Panc1 (cell line): ENCODE measurements at regions of chr19 and their contacts with region 1.

Region 1: GRCh38 chr19:3350014-3350663 is 16.2 kb upstream of the NFIC start:
- DNase-seq: no peak
- ATAC-seq: no peak
- H3K4me3 ChIP-seq: no peak overlapping the region
- H3K27ac ChIP-seq: no peak overlapping the region
- H3K4me1 ChIP-seq: peaks cover 13% of the 10 kb centered on the region
- H3K27me3 ChIP-seq: no peaks in the 10 kb centered on the region
- CTCF ChIP-seq: no peak

Region 2: DNA sequence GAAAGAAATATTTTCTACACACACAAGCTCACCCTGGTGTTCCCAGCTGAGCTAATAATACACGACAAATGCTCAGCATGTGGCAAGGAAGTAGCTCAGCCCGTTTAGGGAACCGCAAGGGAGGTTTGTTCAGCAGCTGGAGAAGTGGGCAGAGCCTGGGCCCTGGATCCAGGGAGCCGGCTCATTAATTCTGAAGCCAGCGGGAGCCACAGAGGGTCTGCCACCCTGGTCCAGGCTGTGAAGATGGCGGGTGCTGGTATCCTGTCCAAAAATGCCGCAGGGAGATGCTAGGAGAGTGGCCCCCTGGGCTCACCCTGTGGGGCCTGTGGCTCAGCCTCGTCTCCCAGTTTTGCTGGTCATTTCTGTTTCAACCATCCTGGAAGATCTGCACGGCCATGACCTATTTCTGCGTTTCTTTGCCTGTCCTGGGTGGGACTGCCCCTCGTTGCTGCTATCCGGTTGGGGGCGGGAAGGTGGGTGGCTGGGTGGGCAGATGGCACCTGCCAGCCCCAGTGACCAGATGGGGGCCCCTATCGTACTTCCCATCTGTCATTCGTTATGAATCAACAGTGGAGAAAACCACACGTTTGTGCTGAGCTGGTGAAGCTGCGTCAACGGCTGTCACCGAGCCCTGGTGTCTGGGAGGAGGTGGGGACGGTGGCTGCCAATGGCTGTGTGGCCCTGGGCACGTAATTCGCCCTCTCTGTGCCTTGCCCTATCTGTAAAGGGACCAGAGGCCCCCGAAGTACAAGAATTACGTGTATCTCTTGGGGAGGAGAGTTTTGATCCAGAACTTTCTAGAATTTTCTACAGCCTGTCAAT is 217.0 kb before region 1 on chr19:
- CTCF ChIA-PET with region 1: no interaction called
- POLR2A ChIA-PET with region 1: interaction called, 15 read pairs
- in situ Hi-C with region 1: no loop called
- intact Hi-C with region 1: no loop called
- DNase-seq: no peak
- ATAC-seq: peak; percentile 73
- H3K4me3 ChIP-seq: peak overlapping the region in 1 of 2 experiments; percentile 18; a peak in 1 of 4 replicates
- H3K27ac ChIP-seq: peak overlapping the region; percentile 59; the same call in 1 of the 2 replicates
- H3K4me1 ChIP-seq: peaks cover 4% of the 10 kb centered on the region
- H3K27me3 ChIP-seq: no peaks in the 10 kb centered on the region
- CTCF ChIP-seq: no peak

Region 3: DNA sequence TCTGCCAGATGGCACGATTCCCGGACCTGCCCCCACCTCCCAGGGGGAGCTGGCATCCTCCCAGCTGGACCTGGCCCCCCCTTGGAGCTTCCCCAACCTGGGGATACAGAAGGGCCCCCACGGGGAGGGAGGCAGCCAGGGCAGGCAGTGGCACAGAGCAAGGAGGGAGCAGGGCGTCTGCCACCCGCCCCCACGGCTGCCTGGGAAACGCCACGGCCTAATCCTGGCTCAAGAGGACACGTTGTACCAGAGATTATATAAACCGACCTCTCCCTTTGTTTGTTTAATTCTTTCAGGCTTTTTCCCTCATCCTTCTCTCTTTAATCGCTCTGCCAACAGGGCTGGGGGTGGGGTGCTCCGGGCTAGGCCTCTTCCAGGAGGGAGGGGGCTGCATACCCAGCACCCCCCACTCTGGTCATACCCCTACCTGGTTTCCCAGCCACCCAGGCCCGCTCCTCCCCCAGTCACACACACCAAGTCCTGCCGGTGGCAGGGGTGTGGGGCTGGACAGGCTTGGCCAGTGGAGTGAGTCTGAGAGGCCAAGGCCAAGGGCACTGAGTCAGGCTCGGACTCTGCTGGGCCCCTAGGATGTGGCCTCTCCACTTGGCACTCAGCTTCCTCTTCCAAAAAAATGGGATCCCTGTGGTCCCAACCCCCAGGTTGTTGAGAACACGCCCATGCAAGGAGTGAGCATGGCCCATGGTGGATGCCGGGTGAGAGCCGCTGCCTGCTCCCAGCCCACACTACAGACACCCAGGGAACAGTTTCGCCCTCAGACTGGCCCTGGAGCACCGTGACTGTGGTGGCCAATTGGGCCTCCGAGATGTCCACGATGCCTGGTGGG is 13.2 kb before region 1 on chr19:
- CTCF ChIA-PET with region 1: no interaction called
- POLR2A ChIA-PET with region 1: no interaction called
- in situ Hi-C with region 1: no loop called
- intact Hi-C with region 1: no loop called
- DNase-seq: no peak
- ATAC-seq: peak; percentile 78
- H3K4me3 ChIP-seq: peak overlapping the region in 1 of 2 experiments; percentile 8; a peak in 1 of 4 replicates
- H3K27ac ChIP-seq: peak overlapping the region; percentile 92
- H3K4me1 ChIP-seq: peaks cover 38% of the 10 kb centered on the region
- H3K27me3 ChIP-seq: no peaks in the 10 kb centered on the region
- CTCF ChIP-seq: no peak